Cardiac septum (tissue), 1 donor: ENCODE measurements at regions of chr19 and their contacts with region 1.

Region 1: GRCh38 chr19:1103708-1104310 is at the start of gene GPX4:
- DNase-seq: peak; percentile 99
- total RNA-seq, gene GPX4: 243 TPM

Region 2: GRCh38 chr19:1020868-1021425 is 82.9 kb before region 1 on chr19 and contains the start of gene TMEM259:
- intact Hi-C with region 1: loop called (anchors 2 kb)
- DNase-seq: peak; percentile 99
- total RNA-seq, gene TMEM259: 125 TPM

Region 3: GRCh38 chr19:1154731-1155351 is 51.0 kb after region 1 on chr19:
- intact Hi-C with region 1: loop called (anchors 2 kb)
- DNase-seq: peak; percentile 96

Region 4: DNA sequence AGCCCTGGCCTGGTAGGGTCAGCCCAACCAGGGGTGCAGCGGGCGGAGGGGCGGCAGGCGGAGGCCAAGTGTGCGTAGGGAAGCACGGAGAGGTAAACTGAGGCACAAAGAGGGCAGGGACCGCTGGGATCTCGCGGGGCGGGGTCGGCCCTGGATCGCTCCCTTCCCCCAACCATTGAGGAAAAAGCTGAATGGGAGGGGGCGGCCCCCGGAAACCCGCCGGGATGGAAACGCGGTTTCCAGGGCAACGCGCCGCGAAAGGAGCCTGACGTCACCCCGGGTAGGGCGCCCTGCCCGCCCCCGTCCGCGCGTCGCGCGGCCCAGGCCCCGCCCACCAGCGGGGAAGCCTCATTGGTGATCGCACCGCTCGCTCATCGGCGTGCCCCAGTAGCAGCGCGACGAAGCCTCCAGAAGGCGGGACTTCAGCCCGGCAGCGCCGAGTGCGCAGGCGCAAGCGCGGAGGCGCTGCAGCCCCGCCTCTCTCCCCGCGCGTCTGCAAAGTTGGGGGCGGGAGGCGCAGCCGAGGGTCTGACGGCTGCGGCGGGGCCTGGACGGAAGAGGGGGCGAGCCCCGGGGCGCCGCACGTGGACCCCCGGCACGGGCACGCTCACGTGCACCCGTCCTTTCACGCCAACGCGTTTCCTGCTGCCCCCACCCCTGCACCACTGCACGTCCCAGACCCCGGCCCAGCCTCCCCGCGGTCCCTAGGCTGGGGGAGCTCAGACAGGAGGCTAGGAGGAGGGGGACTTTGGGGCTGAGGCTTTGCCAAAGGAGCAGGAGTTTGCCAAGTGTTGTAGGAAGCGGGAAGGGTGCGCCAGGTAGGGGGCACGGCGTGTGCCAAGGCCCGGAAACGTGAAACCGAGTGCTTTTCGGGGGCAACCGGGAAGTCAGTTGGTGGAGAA is 157.1 kb after region 1 on chr19:
- intact Hi-C with region 1: no loop called
- DNase-seq: peak; percentile 99